ENCODE measurements at regions of chr12 and their contacts with region 1.

Region 1: GRCh38 chr12:108611884-108612415 is 14.1 kb upstream of the TMEM119 start:
- DNase-seq: peak; percentile 45 to 65 (median 51)
- H3K4me3 ChIP-seq: no peak overlapping the region
- H3K4me3 Mint-ChIP-seq: no peak overlapping the region
- H3K27ac ChIP-seq: no peak overlapping the region
- H3K27ac Mint-ChIP-seq: peak overlapping the region in 3 of 7 donors; percentile 23 to 75 (median 53)
- H3K4me1 ChIP-seq: peaks cover 7% of the 10 kb centered on the region
- H3K4me1 Mint-ChIP-seq: peaks cover 16 to 29% (median 26%) of the 10 kb centered on the region in 4 donors
- H3K27me3 ChIP-seq: no peaks in the 10 kb centered on the region
- H3K27me3 Mint-ChIP-seq: no peaks in the 10 kb centered on the region

Region 2: GRCh38 chr12:108162207-108162606 is 449.7 kb before region 1 on chr12:
- CTCF ChIA-PET with region 1: no interaction called
- POLR2A ChIA-PET with region 1: no interaction called
- intact Hi-C with region 1: no loop called
- DNase-seq: no peak
- H3K4me3 ChIP-seq: no peak overlapping the region
- H3K4me3 Mint-ChIP-seq: no peak overlapping the region
- H3K27ac ChIP-seq: no peak overlapping the region
- H3K27ac Mint-ChIP-seq: no peak overlapping the region
- H3K4me1 ChIP-seq: no peaks in the 10 kb centered on the region
- H3K4me1 Mint-ChIP-seq: no peaks in the 10 kb centered on the region
- H3K27me3 ChIP-seq: no peaks in the 10 kb centered on the region
- H3K27me3 Mint-ChIP-seq: peaks cover 6 to 9% of the 10 kb centered on the region in 2 donors

Region 3: GRCh38 chr12:108643941-108644810 is 32.2 kb after region 1 on chr12:
- CTCF ChIA-PET with region 1: interaction called, 463 read pairs
- POLR2A ChIA-PET with region 1: interaction called, 22 read pairs
- intact Hi-C with region 1: loop called (anchors 5 kb)
- DNase-seq: no peak
- H3K4me3 ChIP-seq: no peak overlapping the region
- H3K4me3 Mint-ChIP-seq: no peak overlapping the region
- H3K27ac ChIP-seq: no peak overlapping the region
- H3K27ac Mint-ChIP-seq: peak overlapping the region in 2 of 7 donors; percentile 32 to 46
- H3K4me1 ChIP-seq: peaks cover 14% of the 10 kb centered on the region
- H3K4me1 Mint-ChIP-seq: peaks cover 18 to 44% (median 25%) of the 10 kb centered on the region in 4 donors
- H3K27me3 ChIP-seq: no peaks in the 10 kb centered on the region
- H3K27me3 Mint-ChIP-seq: no peaks in the 10 kb centered on the region

Region 4: GRCh38 chr12:108649669-108650068 is 37.7 kb after region 1 on chr12:
- CTCF ChIA-PET with region 1: interaction called, 67 read pairs
- POLR2A ChIA-PET with region 1: interaction called, 22 read pairs
- intact Hi-C with region 1: loop called (anchors 5 kb)
- DNase-seq: no peak
- H3K4me3 ChIP-seq: no peak overlapping the region
- H3K4me3 Mint-ChIP-seq: no peak overlapping the region
- H3K27ac ChIP-seq: no peak overlapping the region
- H3K27ac Mint-ChIP-seq: peak overlapping the region in 3 of 7 donors; percentile 0 to 48 (median 3)
- H3K4me1 ChIP-seq: peaks cover 13% of the 10 kb centered on the region
- H3K4me1 Mint-ChIP-seq: peaks cover 17 to 26% (median 21%) of the 10 kb centered on the region in 4 donors
- H3K27me3 ChIP-seq: no peaks in the 10 kb centered on the region
- H3K27me3 Mint-ChIP-seq: no peaks in the 10 kb centered on the region

Measured in CD4-positive, alpha-beta memory T cell (primary cell).